Left cardiac atrium (tissue), 4 donors: ENCODE measurements at regions of chr20 and their contacts with region 1.

Region 1: DNA sequence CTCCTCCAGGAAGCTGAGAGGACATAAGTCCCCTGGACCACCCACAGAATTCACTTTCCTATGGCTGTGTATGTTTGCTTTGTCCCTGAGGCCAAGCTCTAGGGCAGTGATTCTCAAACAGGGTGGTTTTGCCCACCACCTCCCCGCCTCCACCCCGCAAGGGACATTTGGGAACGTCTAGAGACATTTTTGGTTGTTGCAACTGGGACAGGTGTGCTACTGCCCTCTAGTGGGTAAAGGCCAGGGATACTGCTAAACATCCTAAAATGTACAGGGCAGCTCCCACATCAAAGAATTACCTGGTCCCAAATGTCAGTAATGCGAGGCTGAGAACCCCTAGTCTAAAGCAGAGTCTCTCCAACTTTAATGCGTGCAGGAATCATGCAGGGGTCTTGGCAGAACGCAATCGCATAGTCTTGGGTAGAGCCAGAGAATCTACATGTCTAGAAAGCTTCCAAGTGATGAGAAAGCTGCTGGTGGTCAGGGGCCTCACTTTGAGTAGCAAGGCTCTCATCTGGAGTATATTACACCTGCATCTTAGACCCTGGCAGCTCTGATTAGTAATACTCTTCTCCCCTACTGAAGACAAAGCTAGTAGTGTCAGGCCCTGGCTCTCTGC is 5.1 kb downstream of the KCNS1 start:
- DNase-seq: peak; percentile 58
- ATAC-seq: peak; percentile 39 to 55

Region 2: GRCh38 chr20:45011108-45011526 is 84.7 kb before region 1 on chr20:
- intact Hi-C with region 1: loop called (anchors 1 to 10 kb)
- DNase-seq: peak; percentile 62
- ATAC-seq: peak; percentile 57 to 64

Region 3: GRCh38 chr20:45044084-45044573 is 51.7 kb before region 1 on chr20:
- intact Hi-C with region 1: loop called in 1 of 2 experiments (anchors 5 kb)
- DNase-seq: no peak
- ATAC-seq: peak; percentile 77 to 84

Region 4: GRCh38 chr20:45138561-45139300 is 42.9 kb after region 1 on chr20:
- intact Hi-C with region 1: no loop called
- DNase-seq: peak; percentile 36
- ATAC-seq: no peak

Region 5: DNA sequence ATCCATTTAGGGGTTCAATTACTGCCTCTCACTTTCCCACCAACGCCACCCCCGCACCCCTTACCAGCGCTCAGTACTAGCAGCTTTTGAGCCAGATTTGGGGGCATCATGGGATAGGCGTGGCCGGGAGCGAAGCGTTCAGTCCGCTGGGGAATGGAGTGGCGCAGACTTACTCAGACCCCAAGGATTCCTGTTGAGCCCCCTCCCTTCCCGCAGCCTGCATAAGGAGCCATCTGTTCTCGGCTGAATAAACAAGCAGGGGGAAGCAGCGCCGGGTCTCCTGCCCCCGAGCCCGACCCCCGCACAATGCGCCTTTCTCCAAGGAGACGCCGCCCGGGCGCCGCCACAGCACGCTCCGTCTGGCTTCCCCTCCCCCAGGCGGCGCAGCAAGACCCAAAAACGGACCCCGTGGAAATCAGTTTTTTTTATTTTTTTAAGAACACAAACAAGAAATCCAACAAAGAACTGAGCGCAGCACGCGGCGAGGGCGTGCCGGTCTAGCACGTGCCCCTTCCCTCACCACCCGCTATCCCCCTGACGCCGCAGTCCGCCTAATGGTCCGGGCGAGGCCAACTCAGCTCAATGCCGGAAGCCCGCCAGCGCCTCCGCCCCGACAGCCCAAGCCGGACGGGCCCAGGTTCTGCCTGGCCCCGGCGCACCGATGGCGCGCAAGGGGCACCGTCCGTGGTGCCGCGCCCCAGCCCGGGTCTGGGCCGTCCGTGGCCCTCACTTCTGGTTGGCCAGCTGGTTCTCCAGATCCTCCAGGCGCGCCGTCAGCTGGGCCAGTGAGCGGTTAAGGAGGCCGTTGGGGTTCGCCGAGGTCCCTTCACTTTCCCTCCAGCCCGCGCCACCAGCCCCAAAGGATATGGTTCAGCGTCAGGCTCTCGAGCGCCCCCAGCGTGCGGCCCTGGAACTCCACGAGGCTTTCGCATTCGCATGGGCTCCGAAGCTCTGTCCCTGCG is 197.5 kb after region 1 on chr20:
- intact Hi-C with region 1: loop called in 1 of 2 experiments (anchors 10 kb)
- DNase-seq: peak; percentile 88
- ATAC-seq: peak; percentile 80 to 91